ENCODE measurements at regions of chr11 and their contacts with region 1.

Region 1: GRCh38 chr11:111676878-111677585 is 74.8 kb downstream of the SIK2 start:
- DNase-seq: no peak
- ATAC-seq: peak; percentile 47 to 83 (median 72)
- H3K4me3 ChIP-seq: no peak overlapping the region
- H3K27ac ChIP-seq: peak overlapping the region in 9 of 12 donors; percentile 6 to 60 (median 46)
- H3K4me1 ChIP-seq: peaks cover 0 to 24% (median 8%) of the 10 kb centered on the region in 12 donors
- H3K27me3 ChIP-seq: no peaks in the 10 kb centered on the region
- CTCF ChIP-seq: no peak
- POLR2A ChIP-seq: no peak

Region 2: GRCh38 chr11:111623527-111624030 is 53.5 kb before region 1 on chr11:
- intact Hi-C with region 1: loop called in 1 of 10 experiments (anchors 10 kb)
- DNase-seq: no peak
- ATAC-seq: peak in 2 of 4 donors; percentile 52
- H3K4me3 ChIP-seq: no peak overlapping the region
- H3K27ac ChIP-seq: no peak overlapping the region
- H3K4me1 ChIP-seq: peaks cover 0 to 9% (median 0%) of the 10 kb centered on the region in 12 donors
- H3K27me3 ChIP-seq: no peaks in the 10 kb centered on the region
- CTCF ChIP-seq: no peak
- POLR2A ChIP-seq: no peak

Region 3: DNA sequence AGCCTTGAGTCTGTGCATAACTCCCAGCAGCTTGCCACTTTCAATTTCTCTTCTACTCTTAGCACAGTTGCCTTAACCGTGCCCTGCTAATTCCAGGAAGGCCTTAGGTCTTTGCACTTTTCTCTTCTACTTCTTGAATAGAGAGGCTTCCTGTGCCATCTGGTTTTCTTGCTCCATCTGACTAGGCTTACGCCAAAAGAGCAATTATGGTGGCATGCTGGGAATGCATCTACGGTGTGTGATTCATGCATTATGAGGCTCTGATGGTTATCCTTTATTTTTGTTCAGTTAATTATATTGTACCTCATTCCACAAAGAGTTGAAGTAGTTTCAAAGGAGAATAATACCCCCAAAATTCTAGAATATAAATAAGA is 45.4 kb before region 1 on chr11:
- intact Hi-C with region 1: loop called in 2 of 10 experiments (anchors 5 to 10 kb)
- DNase-seq: no peak
- ATAC-seq: no peak
- H3K4me3 ChIP-seq: no peak overlapping the region
- H3K27ac ChIP-seq: peak overlapping the region in 1 of 12 donors; percentile 23
- H3K4me1 ChIP-seq: peaks cover 4 to 59% (median 38%) of the 10 kb centered on the region in 12 donors
- H3K27me3 ChIP-seq: no peaks in the 10 kb centered on the region
- CTCF ChIP-seq: no peak
- POLR2A ChIP-seq: no peak

Region 4: DNA sequence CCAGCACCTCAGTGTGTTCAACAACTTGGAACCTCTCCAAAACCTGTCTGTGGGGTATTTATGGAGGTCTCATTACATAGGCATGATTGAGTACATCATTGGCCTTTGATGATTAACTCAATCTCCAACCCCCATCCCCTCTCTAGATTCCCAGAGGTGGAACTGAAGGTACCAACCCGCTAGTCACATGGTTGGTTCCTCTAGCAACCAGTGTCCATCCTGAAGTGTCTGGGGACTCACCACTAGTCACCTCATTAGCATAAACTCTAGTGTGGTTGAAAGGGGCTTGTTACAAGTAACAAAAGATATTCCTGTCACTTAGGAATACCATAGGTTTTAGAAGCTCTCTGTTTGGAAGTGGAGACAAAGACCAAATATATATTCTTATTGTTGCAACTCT is 34.5 kb before region 1 on chr11:
- intact Hi-C with region 1: loop called in 1 of 10 experiments (anchors 5 kb)
- DNase-seq: no peak
- ATAC-seq: no peak
- H3K4me3 ChIP-seq: no peak overlapping the region
- H3K27ac ChIP-seq: no peak overlapping the region
- H3K4me1 ChIP-seq: peaks cover 0 to 26% (median 5%) of the 10 kb centered on the region in 12 donors
- H3K27me3 ChIP-seq: no peaks in the 10 kb centered on the region
- CTCF ChIP-seq: no peak
- POLR2A ChIP-seq: no peak

Measured in heart left ventricle (tissue), 16 donors.